ENCODE measurements at regions of chr4 and their contacts with region 1.

Region 1: GRCh38 chr4:149897783-149898182 is 82.1 kb upstream of the IQCM start:
- DNase-seq: no peak
- H3K4me3 ChIP-seq: no peak overlapping the region
- H3K27me3 ChIP-seq: no peaks in the 10 kb centered on the region
- CTCF ChIP-seq: peak; percentile 46

Region 2: GRCh38 chr4:149370785-149371420 is 526.9 kb before region 1 on chr4:
- CTCF ChIA-PET with region 1: interaction called, 53 read pairs
- POLR2A ChIA-PET with region 1: no interaction called
- DNase-seq: peak; percentile 11
- H3K4me3 ChIP-seq: no peak overlapping the region
- H3K27me3 ChIP-seq: no peaks in the 10 kb centered on the region
- CTCF ChIP-seq: peak; percentile 46

Region 3: GRCh38 chr4:149885896-149886295 is 11.9 kb before region 1 on chr4:
- CTCF ChIA-PET with region 1: interaction called, 16 read pairs
- POLR2A ChIA-PET with region 1: no interaction called
- DNase-seq: peak; percentile 69
- H3K4me3 ChIP-seq: no peak overlapping the region
- H3K27me3 ChIP-seq: no peaks in the 10 kb centered on the region
- CTCF ChIP-seq: no peak